Activated T-helper 1 cell treated with anti-CD3 and anti-CD28 coated beads, Interleukin-12 subunit alpha, Interleukin-12 subunit beta, Interleukin-2, Interleukin-4 antibody, amounts not matched to agents 30 ng/mL and 10 ng/mL and 1 ng/mL, durations not matched to agents 14 hours and 24 hours and 36 hours (primary cell): ENCODE measurements at regions of chr15 and their contacts with region 1.

Region 1: GRCh38 chr15:31435261-31435911 is 108.8 kb downstream of the KLF13 start:
- DNase-seq: peak; percentile 86
- H3K4me3 Mint-ChIP-seq: peak overlapping the region; percentile 58
- H3K27ac Mint-ChIP-seq: peak overlapping the region; percentile 93
- H3K4me1 Mint-ChIP-seq: peaks cover 77% of the 10 kb centered on the region
- H3K27me3 Mint-ChIP-seq: no peaks in the 10 kb centered on the region

Region 2: DNA sequence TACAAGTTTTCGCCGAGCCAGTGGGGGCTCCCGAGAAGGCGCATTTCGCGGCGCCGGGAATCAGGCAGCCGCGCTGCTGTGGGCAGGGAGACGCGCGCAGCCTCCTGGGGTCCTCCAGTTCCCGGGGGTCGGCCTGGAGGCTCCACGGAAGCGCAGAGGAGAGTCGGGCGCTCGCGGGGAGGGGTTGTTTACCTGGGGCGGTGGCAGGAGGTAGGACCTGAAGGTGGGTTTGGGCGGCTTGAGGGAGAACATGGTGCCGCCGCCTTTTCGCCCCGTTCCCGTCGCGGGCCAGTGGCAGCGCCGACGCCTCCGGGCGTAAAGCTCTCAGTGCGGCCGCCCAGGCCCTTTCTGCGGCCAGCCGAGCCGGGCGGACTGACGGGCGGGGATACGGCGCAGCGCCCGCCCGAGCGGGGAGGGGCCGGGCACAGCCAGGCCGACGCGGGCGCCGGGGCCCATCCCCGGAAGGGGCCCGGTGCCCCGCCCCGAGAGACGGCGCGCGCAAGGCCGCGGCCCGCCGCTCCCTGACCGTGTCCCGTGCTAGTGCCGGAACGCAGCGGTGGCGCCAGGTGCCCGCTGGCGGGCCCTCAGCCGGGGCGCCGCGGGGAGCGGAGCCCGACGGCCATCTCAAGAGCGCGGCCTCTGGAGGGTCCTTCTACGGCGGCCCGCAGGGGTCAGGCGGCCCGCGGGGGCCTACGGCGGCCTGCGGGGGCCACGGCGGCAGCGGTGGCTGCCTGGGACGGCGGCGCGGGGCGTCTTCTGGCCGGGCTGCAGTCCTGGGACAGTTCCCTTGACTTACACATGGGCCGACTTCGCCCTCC is 443.9 kb before region 1 on chr15 and contains the start of gene MTMR10:
- intact Hi-C with region 1: loop called (anchors 5 kb)
- DNase-seq: peak; percentile 75
- H3K4me3 Mint-ChIP-seq: peak within 1 kb of the TSS; percentile 93
- H3K27ac Mint-ChIP-seq: peak within 1 kb of the TSS; percentile 85
- H3K4me1 Mint-ChIP-seq: peaks cover 26% of the 10 kb centered on the region
- H3K27me3 Mint-ChIP-seq: peaks cover 4% of the 10 kb centered on the region
- total RNA-seq, gene MTMR10: 11.8 and 13.4 TPM in 2 replicates

Region 3: DNA sequence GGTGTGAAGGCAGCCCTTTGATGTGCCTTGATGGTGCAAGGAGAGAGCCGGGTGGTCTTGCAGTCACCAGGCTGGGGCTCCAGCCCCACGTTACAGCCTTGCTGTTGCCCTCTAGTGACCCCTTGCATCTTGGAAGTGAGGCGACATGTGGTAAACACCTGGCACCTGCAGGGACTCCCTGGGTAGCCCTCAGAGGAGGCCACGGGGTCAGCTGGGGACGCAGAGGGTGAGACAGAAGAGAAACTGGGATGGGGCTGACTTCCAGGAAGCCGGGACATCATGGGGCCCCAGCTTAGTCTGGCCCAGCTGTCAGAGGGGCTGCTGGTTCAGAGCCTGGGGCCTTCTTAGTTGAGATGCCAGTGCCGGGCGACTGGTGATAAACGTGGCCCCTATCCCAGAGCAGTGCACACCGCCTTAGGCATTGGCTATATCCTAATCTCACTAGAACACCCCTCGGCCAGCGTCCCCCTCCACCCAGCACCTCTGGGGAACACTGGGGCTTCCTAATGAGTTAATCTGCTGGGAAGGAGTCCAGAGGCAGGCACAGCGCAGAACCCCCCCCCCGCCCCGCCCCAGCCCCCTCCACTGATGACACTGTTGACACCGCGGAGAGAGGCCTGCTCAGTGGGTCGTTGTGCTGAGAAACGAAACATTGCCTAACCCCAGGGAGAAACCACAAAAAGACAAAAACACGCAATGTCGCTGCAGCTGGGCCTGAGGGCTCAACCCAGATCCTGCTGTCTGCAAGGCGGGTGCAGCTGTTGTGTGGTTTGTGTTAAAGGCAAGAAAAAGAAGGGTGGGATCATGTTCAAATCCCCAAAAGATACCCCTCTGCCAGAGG is 169.3 kb before region 1 on chr15:
- intact Hi-C with region 1: loop called (anchors 1 kb)
- DNase-seq: peak; percentile 79
- H3K4me3 Mint-ChIP-seq: peak overlapping the region; percentile 52
- H3K27ac Mint-ChIP-seq: peak overlapping the region; percentile 79
- H3K4me1 Mint-ChIP-seq: peaks cover 94% of the 10 kb centered on the region
- H3K27me3 Mint-ChIP-seq: no peaks in the 10 kb centered on the region

Region 4: GRCh38 chr15:31365655-31366127 is 69.7 kb before region 1 on chr15:
- intact Hi-C with region 1: loop called (anchors 1 kb)
- DNase-seq: peak; percentile 69
- H3K4me3 Mint-ChIP-seq: peak overlapping the region; percentile 77
- H3K27ac Mint-ChIP-seq: peak overlapping the region; percentile 99
- H3K4me1 Mint-ChIP-seq: peaks cover 97% of the 10 kb centered on the region
- H3K27me3 Mint-ChIP-seq: no peaks in the 10 kb centered on the region

Region 5: DNA sequence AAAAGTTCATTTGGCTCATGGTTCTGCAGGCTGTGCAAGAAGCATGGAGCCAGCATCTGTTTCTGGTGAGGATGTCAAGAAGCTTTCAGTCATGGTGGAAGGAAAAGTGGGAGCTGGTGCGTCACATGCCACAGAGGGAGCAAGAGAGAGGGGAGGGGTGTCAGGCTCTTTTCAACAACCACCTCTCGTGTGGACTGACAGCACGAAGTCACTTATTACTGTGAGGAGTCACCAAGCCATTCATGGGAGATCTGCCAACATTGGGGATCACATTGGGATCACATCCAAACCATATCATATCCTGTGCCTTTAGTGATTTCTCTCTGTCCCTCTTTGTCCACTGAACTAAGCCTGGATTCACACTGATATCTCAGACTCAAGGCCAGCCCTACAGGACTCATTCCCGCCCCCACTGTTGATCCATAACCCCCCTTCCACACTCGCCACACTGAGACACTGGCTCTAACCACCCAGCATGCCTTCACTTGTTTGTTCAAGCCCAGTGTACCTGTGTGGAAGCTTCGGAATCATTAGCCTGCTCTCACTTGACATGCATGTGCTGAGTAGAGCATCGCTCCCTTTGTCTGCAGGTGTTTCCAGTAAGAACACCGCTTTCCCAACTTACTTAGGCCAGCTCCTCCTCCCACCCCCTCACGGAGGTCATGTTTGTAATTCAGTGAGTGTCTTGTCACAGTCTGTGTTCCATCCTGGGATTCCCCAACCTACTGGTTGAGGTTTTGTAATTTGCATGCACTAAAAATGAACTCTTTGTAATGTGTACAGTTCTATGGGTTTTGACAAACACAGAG is 23.4 kb after region 1 on chr15:
- intact Hi-C with region 1: loop called (anchors 1 kb)
- DNase-seq: peak; percentile 57
- H3K4me3 Mint-ChIP-seq: peak overlapping the region; percentile 53
- H3K27ac Mint-ChIP-seq: peak overlapping the region; percentile 86
- H3K4me1 Mint-ChIP-seq: peaks cover 38% of the 10 kb centered on the region
- H3K27me3 Mint-ChIP-seq: no peaks in the 10 kb centered on the region

Region 6: GRCh38 chr15:31483053-31483985 is 47.9 kb after region 1 on chr15:
- intact Hi-C with region 1: loop called (anchors 1 kb)
- DNase-seq: peak; percentile 42
- H3K4me3 Mint-ChIP-seq: peak overlapping the region; percentile 92
- H3K27ac Mint-ChIP-seq: peak overlapping the region; percentile 99
- H3K4me1 Mint-ChIP-seq: peaks cover 64% of the 10 kb centered on the region
- H3K27me3 Mint-ChIP-seq: peaks cover 2% of the 10 kb centered on the region

Region 7: DNA sequence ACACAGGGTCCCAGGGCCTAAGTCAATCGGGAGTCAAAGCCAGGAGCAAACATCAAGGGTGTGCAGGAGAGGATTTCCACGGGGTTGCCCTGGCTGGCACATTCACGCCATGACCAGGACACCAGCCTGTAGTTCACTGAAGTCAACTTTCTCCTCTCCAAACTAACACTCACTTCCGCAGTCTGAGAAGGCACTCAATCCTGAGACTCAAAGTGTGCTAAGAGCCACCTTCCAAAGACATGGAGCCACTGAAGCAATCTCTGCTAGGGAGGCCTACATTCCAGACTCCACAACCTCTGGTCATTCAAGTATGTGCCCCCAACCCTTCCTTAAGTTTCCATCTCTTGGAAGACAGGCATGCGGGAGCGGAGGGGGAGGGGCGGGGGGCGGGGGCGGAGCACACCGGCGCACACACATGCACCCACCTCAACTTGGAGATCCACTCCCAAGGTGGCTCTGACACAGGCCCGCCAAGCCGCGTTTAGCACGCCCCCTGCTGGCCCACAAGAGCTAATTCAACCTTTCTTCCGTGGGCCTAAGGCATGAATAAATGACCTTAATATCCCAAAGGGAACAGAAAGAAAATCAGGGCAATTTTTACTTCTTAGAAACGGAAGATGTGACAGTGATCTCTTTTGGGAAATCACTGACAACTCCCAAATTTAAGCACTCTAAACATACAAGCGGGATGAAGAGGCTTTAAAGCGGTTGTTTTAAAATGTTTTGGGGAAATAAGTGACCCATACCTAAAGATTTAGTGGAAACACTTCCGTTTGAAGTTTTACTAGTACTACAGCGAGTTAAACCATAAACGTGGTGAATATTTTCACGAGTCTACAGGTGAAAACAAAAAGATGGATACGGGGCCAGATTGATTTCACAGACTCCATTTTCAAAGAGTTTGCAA is 432.4 kb after region 1 on chr15:
- intact Hi-C with region 1: loop called (anchors 5 kb)
- DNase-seq: peak; percentile 35
- H3K4me3 Mint-ChIP-seq: peak overlapping the region; percentile 65
- H3K27ac Mint-ChIP-seq: no peak overlapping the region
- H3K4me1 Mint-ChIP-seq: peaks cover 15% of the 10 kb centered on the region
- H3K27me3 Mint-ChIP-seq: peaks cover 34% of the 10 kb centered on the region